Mammary epithelial cell (primary cell): ENCODE measurements at regions of chr20 and their contacts with region 1.

Region 1: GRCh38 chr20:58970146-58970545 is 10.9 kb upstream of the NELFCD start:
- DNase-seq: no peak
- H3K4me3 ChIP-seq: no peak overlapping the region
- H3K27ac ChIP-seq: no peak overlapping the region
- H3K4me1 ChIP-seq: no peaks in the 10 kb centered on the region
- H3K27me3 ChIP-seq: no peaks in the 10 kb centered on the region
- CTCF ChIP-seq: no peak

Region 2: DNA sequence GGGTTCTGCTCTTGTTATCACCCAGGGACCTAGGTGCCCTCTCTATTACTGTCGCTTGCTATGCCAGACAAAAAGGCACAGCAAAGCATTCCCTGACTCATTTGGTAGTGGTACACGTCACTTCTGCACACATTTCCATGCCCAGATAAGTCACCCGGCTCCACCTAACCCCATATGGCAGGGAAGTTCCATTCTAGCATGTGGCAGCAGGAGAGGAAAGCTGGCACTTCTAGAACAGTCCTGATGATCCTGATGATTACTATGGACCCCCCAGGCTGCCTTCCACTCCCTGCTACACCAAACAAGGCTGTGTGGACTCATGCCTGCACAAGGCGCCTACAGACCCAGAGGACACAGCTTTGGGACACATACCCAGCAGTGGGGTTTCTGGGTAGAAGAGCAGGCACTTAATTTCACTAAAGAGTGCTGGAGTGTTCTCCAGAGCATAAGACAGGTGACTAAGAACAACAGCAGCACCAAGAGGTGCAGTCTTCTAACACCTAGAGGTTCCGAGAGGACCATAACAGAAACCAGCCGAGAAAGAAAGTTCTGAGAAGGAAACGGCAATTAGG is 42.6 kb before region 1 on chr20:
- CTCF ChIA-PET with region 1: no interaction called
- dilution Hi-C with region 1: loop called (anchors 5 kb)
- in situ Hi-C with region 1: no loop called
- intact Hi-C with region 1: no loop called
- DNase-seq: peak; percentile 2
- H3K4me3 ChIP-seq: no peak overlapping the region
- H3K27ac ChIP-seq: no peak overlapping the region
- H3K4me1 ChIP-seq: no peaks in the 10 kb centered on the region
- H3K27me3 ChIP-seq: no peaks in the 10 kb centered on the region
- CTCF ChIP-seq: no peak

Region 3: DNA sequence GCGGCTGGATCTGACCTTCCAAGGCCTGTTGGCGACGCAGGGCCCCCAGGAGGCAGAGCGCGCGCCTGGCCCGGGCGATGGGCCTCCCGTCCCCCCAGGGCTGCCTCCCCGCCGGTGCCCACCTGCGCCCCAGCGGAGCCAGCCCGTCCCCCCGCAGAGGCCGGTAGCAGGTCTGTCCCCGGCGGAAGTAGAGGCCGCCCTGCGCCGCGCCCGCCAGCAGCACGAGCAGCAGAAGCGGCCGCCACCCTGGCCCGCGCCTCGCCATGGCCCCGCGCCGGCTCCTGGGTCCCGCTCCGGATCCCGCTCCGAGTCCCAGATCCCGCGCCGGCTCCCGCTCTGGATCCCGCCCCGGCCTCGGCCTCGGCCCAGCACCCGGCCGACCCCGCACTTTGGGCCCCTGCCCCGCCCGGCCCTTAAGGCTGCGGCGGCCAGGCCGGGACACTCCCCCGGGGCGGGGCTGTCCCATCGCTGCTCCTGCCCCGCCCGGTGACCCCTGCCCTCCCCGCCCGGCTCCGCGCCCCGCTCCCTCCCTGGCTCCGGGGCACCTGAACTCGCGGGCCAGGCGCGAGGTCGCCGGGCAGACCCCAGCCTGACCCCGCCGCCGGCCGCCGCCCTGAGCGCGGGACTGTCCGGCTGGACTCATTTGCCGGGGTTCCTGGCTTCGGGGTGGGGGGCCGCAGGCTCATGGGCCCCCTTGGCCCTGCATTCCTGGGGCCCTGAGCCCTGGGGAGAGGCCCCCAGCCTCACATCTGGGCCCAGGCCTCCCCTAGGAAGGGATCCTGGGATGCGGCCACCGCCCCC is 36.9 kb after region 1 on chr20 and contains the start of gene CTSZ:
- CTCF ChIA-PET with region 1: no interaction called
- dilution Hi-C with region 1: loop called (anchors 5 kb)
- in situ Hi-C with region 1: no loop called
- intact Hi-C with region 1: no loop called
- DNase-seq: peak; percentile 13
- H3K4me3 ChIP-seq: peak within 1 kb of the TSS; percentile 53 to 70 (median 58)
- H3K27ac ChIP-seq: peak within 1 kb of the TSS; percentile 40
- H3K4me1 ChIP-seq: peaks cover 44% of the 10 kb centered on the region
- H3K27me3 ChIP-seq: no peaks in the 10 kb centered on the region
- CTCF ChIP-seq: peak in 1 of 2 donors; percentile 2
- total RNA-seq, gene CTSZ: 138 to 139 TPM